CD8-positive, alpha-beta memory T cell (primary cell): ENCODE measurements at regions of chr3 and their contacts with region 1.

Region 1: DNA sequence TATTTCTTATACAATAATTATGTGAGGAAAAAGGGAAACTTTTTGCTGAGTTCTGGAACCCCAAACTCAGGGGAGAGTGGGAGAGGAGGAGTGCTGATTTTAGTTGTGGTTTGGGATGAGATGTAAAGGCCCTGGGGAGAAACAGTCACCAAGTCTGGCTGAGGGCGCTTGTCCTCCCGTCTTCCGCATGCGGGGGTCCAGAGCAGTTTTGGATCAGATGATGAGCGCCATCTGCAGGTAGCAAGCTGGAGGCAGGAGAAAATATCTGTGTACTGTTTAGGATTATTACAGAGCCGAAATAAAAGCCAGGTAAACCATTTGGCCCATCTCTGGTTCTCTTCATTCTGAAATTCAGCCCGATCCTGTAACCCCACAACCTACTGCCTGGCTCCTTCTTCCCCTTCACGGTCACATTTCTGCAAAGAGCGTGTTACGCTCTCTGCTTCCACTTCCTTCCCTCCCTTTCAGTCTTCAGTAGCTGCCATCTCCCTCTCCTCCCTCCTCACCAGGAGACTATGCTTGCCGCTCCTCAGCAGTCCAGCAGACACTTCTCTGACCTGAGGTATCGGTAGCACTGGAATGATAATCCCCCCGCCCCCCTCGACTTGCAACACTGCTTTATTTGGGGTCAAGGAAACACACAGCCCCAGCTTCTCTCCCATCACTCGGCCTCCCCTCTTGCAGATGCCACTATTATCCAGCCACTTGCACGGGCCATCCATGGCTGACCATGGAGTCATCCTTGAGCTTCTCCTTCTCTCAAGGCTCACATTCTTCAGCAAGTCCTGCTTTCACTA is 1.4 kb upstream of the PARP14 start:
- DNase-seq: peak; percentile 72 to 89 (median 77)
- H3K4me3 ChIP-seq: peak overlapping the region; percentile 92
- H3K4me3 Mint-ChIP-seq: peak overlapping the region; percentile 93 to 99 (median 97)
- H3K27ac ChIP-seq: peak overlapping the region; percentile 93
- H3K27ac Mint-ChIP-seq: peak overlapping the region; percentile 96 to 99 (median 98)
- H3K4me1 ChIP-seq: peaks cover 44% of the 10 kb centered on the region
- H3K4me1 Mint-ChIP-seq: peaks cover 49 to 58% (median 57%) of the 10 kb centered on the region in 3 donors
- H3K27me3 ChIP-seq: no peaks in the 10 kb centered on the region
- H3K27me3 Mint-ChIP-seq: no peaks in the 10 kb centered on the region

Region 2: DNA sequence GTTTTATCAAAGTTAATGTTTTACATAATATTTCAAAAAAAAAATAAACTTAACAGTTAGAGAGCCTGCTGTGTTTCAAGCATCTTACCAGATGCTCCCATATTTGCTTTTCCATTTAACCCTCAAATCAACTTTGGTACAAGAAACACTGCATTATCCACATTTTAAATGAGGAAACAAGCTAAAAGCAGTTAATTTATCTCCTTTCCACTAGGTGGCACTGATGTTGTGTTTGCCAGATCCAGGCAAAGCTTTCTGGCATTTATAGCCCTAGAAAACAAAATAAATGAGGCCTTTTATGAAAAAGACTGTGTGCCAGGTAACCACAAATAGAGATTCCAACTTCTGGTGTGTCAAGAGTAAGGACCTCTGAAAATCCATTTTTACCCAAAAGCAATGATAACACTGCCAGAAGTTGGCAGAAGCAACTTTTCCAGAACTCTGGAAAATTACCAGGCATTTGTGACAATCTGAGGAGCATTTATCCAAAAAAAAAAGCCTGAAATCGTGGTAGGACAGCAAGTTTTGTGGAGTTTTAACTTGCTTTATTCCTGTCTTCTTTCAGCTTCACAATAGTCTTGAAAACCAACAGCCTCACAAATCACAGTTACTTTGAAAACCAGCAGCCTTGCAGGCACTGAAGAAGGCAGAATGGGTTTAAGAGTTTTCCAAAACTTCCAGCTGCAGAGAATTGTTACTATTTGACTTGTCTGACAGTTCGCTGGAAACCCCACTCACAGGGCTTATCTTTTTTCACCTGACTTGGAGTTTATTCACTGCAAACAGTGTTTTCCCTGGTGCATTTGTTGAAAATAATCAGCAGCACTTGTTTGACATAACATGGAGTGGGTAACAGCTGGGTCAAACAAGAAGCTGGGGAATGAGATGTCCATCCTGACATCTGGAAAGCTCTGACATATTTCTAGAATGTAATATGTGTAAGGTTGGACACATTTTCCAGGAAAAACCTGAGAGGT is 286.1 kb before region 1 on chr3:
- CTCF ChIA-PET with region 1: interaction called, 18 read pairs
- POLR2A ChIA-PET with region 1: interaction called, 5 read pairs
- DNase-seq: peak in 2 of 5 donors; percentile 36 to 39
- H3K4me3 ChIP-seq: no peak overlapping the region
- H3K4me3 Mint-ChIP-seq: no peak overlapping the region
- H3K27ac ChIP-seq: no peak overlapping the region
- H3K27ac Mint-ChIP-seq: no peak overlapping the region
- H3K4me1 ChIP-seq: no peaks in the 10 kb centered on the region
- H3K4me1 Mint-ChIP-seq: peaks cover 4 to 14% (median 8%) of the 10 kb centered on the region in 3 donors
- H3K27me3 ChIP-seq: no peaks in the 10 kb centered on the region
- H3K27me3 Mint-ChIP-seq: no peaks in the 10 kb centered on the region

Region 3: DNA sequence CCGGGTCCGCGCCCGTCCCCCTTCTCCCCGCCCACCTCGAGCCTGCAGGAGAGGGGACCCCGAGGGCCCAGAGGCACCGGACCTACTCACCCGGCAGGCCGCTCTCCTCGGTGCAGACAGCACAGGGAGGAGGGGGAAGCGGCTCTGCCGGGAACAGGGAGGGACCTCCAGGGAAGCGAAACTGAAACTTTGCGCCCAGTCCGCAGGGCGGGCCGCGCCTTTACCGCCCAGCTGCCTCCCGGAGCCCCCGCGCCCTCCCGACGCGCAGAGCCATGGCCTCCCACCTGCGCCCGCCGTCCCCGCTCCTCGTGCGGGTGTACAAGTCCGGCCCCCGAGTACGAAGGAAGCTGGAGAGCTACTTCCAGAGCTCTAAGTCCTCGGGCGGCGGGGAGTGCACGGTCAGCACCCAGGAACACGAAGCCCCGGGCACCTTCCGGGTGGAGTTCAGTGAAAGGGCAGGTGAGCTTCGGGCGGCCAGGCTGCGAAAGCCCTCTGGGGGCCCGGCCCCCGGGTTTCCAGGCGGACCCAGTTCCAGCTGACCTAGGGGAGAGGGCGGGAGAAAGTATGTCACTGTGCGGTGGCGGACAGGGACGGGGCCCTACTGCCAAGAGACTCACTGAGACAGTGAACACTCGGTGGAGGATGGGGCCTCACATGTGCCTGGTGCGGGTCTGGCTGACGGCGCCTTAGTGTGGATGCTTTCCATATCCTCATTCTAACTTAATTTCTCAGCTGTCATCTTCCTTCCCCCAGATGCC is 114.9 kb before region 1 on chr3 and contains the starts of genes DTX3L and PARP9:
- CTCF ChIA-PET with region 1: interaction called, 137 read pairs
- POLR2A ChIA-PET with region 1: interaction called, 39 read pairs
- DNase-seq: peak; percentile 73 to 86 (median 80)
- H3K4me3 ChIP-seq: peak within 1 kb of the TSS; percentile 86
- H3K4me3 Mint-ChIP-seq: peak within 1 kb of the TSS; percentile 91 to 96 (median 94)
- H3K27ac ChIP-seq: peak within 1 kb of the TSS; percentile 86
- H3K27ac Mint-ChIP-seq: peak within 1 kb of the TSS; percentile 88 to 99 (median 95)
- H3K4me1 ChIP-seq: peaks cover 65% of the 10 kb centered on the region
- H3K4me1 Mint-ChIP-seq: peaks cover 70 to 85% (median 83%) of the 10 kb centered on the region in 3 donors
- H3K27me3 ChIP-seq: no peaks in the 10 kb centered on the region
- H3K27me3 Mint-ChIP-seq: no peaks in the 10 kb centered on the region
- total RNA-seq, gene DTX3L: 22.9 to 24.3 TPM
- total RNA-seq, gene PARP9: 13.2 to 13.4 TPM

Region 4: GRCh38 chr3:122577409-122578031 is 101.8 kb before region 1 on chr3 and contains the start of gene PARP15:
- CTCF ChIA-PET with region 1: interaction called, 19 read pairs
- POLR2A ChIA-PET with region 1: interaction called, 7 read pairs
- DNase-seq: peak; percentile 12 to 60 (median 46)
- H3K4me3 ChIP-seq: peak within 1 kb of the TSS; percentile 49
- H3K4me3 Mint-ChIP-seq: peak within 1 kb of the TSS; percentile 97 to 100 (median 100)
- H3K27ac ChIP-seq: peak within 1 kb of the TSS; percentile 52
- H3K27ac Mint-ChIP-seq: peak within 1 kb of the TSS; percentile 83 to 99 (median 99)
- H3K4me1 ChIP-seq: peaks cover 27% of the 10 kb centered on the region
- H3K4me1 Mint-ChIP-seq: peaks cover 53 to 79% (median 66%) of the 10 kb centered on the region in 3 donors
- H3K27me3 ChIP-seq: no peaks in the 10 kb centered on the region
- H3K27me3 Mint-ChIP-seq: no peaks in the 10 kb centered on the region
- total RNA-seq, gene PARP15: 12.7 to 13.9 TPM

Region 5: DNA sequence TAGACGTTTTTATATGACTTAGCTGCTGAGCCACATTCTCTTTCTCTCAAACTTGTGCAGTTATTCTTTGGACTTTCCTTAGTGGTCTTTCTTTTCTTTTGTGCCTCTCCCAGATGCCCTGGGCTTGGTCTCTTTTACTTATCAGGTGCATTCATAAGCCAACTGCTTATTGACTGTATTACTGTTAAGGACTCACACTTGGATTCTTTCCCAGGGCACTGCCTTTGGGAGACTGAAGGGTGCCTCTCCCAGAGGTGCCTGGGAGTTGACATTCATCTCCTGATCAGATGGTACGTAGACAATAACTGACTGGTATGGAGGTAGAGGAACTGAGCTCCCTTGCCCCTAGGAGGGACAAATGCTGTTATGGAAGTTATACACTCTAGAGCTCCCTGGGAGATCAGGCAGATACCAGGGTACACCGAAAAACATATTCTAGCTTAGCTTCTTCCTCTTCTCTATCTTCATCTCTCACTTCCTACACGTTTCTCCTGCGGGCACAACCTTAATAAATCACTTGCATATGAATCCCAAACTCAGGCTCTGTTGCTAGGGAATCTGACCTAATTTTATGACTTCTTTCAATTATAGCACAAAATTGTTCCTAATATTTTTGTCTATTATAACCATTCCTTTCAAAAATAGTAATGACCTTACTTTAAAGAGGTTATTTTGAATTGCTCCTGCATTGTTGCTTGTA is 77.1 kb before region 1 on chr3:
- CTCF ChIA-PET with region 1: no interaction called
- POLR2A ChIA-PET with region 1: no interaction called
- DNase-seq: no peak
- H3K4me3 ChIP-seq: no peak overlapping the region
- H3K4me3 Mint-ChIP-seq: no peak overlapping the region
- H3K27ac ChIP-seq: no peak overlapping the region
- H3K27ac Mint-ChIP-seq: peak overlapping the region in 2 of 8 donors; percentile 4 to 43
- H3K4me1 ChIP-seq: no peaks in the 10 kb centered on the region
- H3K4me1 Mint-ChIP-seq: peaks cover 24 to 32% (median 28%) of the 10 kb centered on the region in 3 donors
- H3K27me3 ChIP-seq: no peaks in the 10 kb centered on the region
- H3K27me3 Mint-ChIP-seq: no peaks in the 10 kb centered on the region